ENCODE measurements at regions of chr5 and their contacts with region 1.

Region 1: GRCh38 chr5:93800988-93801811 is 59.8 kb upstream of the POU5F2 start:
- DNase-seq: peak; percentile 17
- CTCF ChIP-seq: peak; percentile 65

Region 2: DNA sequence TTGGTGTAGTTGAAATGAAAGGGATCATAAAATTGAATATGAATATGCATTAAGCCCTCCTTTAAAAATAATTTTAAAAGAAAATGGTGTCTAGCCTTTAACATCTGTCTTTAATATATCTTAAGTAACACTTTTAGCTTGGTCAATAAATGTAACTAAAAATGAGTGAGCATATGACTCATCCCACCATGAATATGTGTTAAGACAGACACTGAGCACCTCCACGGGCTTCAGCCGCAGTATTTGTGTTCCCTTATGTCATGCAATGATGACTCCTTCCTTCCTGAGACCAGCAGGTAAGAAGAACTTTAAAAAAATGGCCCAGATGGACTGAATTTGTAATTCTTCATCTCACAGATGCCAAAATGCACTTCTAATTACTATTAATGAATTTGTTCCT is 783.4 kb before region 1 on chr5:
- CTCF ChIA-PET with region 1: no interaction called
- POLR2A ChIA-PET with region 1: no interaction called
- DNase-seq: no peak
- CTCF ChIP-seq: no peak

Region 3: GRCh38 chr5:93580063-93580926 is 220.9 kb before region 1 on chr5:
- CTCF ChIA-PET with region 1: interaction called, 29 read pairs
- POLR2A ChIA-PET with region 1: no interaction called
- DNase-seq: peak; percentile 31
- CTCF ChIP-seq: no peak

Region 4: DNA sequence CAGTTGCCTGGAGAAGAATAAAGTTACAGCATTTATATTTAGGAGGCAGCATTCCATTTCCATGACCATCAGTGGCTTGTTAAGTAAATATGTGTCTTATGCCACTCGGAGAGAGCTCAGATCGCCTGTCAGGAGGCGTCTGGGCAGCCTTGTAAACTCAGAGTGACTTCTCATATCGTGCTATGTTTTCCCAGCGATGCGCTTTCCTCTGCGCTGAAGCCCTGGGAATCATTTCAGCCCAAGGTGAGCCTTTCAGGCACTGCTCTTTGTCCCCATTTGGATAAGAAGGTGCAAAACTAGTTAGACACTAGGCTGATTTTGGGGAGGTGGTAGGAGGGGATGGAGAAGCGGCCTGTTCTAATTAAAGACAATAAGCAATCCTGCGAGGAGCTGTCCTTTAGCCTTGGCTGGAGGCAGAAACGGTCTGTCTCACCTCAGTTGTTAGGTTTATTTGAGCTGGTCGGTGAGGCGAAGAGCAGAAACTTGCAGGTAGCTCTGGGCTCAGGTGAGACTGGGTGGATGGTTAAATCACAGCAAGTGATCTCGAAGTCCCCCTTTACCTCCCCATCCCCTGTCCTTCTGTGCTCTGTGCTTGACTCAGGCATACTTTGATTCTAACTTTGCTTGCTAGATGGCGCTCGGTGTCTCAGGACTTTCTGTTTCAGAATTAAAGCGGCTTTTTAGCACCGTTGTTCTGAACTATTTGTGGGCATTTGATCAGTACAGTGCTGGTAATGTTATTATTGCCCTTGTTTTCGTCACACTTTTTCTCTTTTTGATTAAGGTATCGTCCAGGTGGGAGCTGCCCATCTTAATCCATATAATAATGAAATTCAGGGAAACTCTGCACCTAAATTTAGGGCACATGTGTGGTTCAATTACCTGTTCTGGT is 193.6 kb before region 1 on chr5:
- CTCF ChIA-PET with region 1: interaction called, 31 read pairs
- POLR2A ChIA-PET with region 1: no interaction called
- DNase-seq: no peak
- CTCF ChIP-seq: peak; percentile 81

Region 5: GRCh38 chr5:93777620-93778019 is 23.6 kb before region 1 on chr5:
- CTCF ChIA-PET with region 1: interaction called, 12 read pairs
- POLR2A ChIA-PET with region 1: no interaction called
- DNase-seq: no peak
- CTCF ChIP-seq: no peak

Region 6: GRCh38 chr5:93819666-93820065 is 18.5 kb after region 1 on chr5:
- CTCF ChIA-PET with region 1: interaction called, 17 read pairs
- POLR2A ChIA-PET with region 1: no interaction called
- DNase-seq: no peak
- CTCF ChIP-seq: no peak

Measured in GM10248 (cell line).